BJ (cell line): ENCODE measurements at regions of chr16 and their contacts with region 1.

Region 1: DNA sequence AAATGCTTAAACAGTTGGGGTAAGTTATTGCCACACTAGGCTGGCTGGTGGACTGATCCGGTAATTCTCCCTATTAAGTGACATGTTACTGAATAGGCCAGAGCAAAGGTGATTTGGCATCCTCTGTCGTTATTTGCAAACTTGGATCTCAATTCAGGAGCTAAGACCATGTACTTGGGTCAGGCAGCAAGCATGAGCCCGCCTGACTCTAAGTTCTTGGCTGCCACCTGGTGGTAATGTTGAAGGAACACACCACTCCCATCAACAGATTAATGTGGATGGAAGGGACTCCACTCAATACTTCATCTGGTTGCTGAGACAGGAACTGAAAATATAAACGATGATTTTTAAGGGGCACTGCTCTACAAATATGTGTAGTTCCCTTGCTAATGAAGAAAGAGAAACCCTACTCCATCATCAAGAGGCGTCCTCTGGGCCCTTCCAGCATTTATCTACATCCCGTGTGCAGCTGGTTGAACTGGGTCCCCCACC is 70.8 kb downstream of the EMP2 start:
- DNase-seq: no peak
- H3K4me3 ChIP-seq: no peak overlapping the region
- H3K27me3 ChIP-seq: no peaks in the 10 kb centered on the region
- CTCF ChIP-seq: peak; percentile 76

Region 2: DNA sequence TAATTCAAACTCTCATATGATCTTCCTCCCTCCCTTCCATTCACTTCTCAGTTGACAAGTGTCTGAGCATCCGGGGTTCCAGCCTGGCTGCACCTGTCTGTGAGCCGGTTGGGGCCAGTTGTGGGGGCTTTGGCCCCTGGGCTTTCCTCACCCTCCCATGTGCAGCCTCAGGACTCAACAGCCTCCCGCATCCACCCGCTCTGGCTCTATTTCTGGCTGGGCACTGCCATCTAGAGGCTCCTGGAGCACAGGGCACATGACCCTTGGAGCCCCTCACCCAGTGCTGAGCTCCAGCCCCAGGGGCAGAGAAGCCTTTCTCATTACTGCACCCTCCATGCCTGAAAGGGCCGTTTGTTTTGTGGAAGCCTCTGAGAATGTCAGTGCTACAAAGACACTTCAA is 1374.8 kb before region 1 on chr16:
- CTCF ChIA-PET with region 1: interaction called, 14 read pairs
- POLR2A ChIA-PET with region 1: no interaction called
- DNase-seq: no peak
- H3K4me3 ChIP-seq: no peak overlapping the region
- H3K27me3 ChIP-seq: no peaks in the 10 kb centered on the region; the same call in 1 of the 2 replicates
- CTCF ChIP-seq: peak; percentile 63

Region 3: GRCh38 chr16:10521681-10522274 is 12.2 kb after region 1 on chr16:
- CTCF ChIA-PET with region 1: interaction called, 16 read pairs
- POLR2A ChIA-PET with region 1: no interaction called
- DNase-seq: no peak
- H3K4me3 ChIP-seq: no peak overlapping the region
- H3K27me3 ChIP-seq: no peaks in the 10 kb centered on the region
- CTCF ChIP-seq: peak; percentile 87

Region 4: GRCh38 chr16:10731790-10732189 is 222.2 kb after region 1 on chr16:
- CTCF ChIA-PET with region 1: interaction called, 83 read pairs
- POLR2A ChIA-PET with region 1: no interaction called
- DNase-seq: no peak
- H3K4me3 ChIP-seq: no peak overlapping the region
- H3K27me3 ChIP-seq: 0 out of 2 replicates have a peak, but pooled peaks cover 3% of the 10 kb centered on the region
- CTCF ChIP-seq: no peak

Region 5: GRCh38 chr16:10918294-10919002 is 408.9 kb after region 1 on chr16:
- CTCF ChIA-PET with region 1: interaction called, 10 read pairs
- POLR2A ChIA-PET with region 1: no interaction called
- DNase-seq: peak; percentile 50
- H3K4me3 ChIP-seq: no peak overlapping the region
- H3K27me3 ChIP-seq: no peaks in the 10 kb centered on the region; the same call in 1 of the 2 replicates
- CTCF ChIP-seq: peak; percentile 99